ENCODE measurements at regions of chr14 and their contacts with region 1.

Region 1: DNA sequence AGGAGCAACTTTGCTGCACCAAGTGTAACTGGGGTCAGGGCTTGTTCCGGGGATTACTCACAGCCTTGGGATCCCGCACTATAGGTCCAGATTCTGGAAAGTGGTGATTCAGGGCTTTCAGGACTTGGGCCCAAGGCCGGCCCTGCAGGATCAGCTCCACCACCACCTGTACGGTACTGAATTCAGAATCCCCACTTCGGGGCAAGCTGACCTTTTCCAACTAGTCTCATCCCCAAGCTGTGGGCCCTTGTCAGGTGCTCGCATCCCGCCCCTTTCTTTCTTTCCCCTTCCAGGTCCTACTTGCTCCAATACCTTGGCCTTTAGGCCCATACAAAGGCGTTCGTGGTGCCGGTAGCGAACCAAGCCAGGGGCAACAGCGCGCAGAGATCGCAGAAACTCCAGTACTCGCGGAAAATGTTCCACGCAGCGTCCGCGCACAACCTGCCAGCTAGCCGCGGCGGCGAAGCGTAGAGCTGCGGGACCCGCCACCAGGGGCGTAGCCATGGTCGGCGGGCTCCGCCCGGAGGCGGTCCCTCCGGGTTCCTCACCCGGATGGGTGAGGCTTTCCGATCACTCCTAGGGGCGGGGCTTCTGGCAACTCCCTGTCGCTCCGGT is 487 bp downstream of the TINF2 start:
- H3K4me3 Mint-ChIP-seq: peak overlapping the region; percentile 93
- H3K27ac Mint-ChIP-seq: peak overlapping the region; percentile 100
- H3K4me1 Mint-ChIP-seq: peaks cover 75% of the 10 kb centered on the region
- H3K27me3 Mint-ChIP-seq: no peaks in the 10 kb centered on the region

Region 2: GRCh38 chr14:24215495-24216344 is 26.2 kb before region 1 on chr14 and contains the start of gene MDP1:
- intact Hi-C with region 1: loop called (anchors 1 kb)
- H3K4me3 Mint-ChIP-seq: peak within 1 kb of the TSS; percentile 90
- H3K27ac Mint-ChIP-seq: peak within 1 kb of the TSS; percentile 99
- H3K4me1 Mint-ChIP-seq: peaks cover 41% of the 10 kb centered on the region
- H3K27me3 Mint-ChIP-seq: no peaks in the 10 kb centered on the region

Region 3: GRCh38 chr14:24226477-24226876 is 15.5 kb before region 1 on chr14:
- intact Hi-C with region 1: no loop called
- H3K4me3 Mint-ChIP-seq: no peak overlapping the region
- H3K27ac Mint-ChIP-seq: no peak overlapping the region
- H3K4me1 Mint-ChIP-seq: peaks cover 33% of the 10 kb centered on the region
- H3K27me3 Mint-ChIP-seq: no peaks in the 10 kb centered on the region

Region 4: GRCh38 chr14:24271134-24271833 is 29.3 kb after region 1 on chr14 and contains the start of gene RABGGTA:
- intact Hi-C with region 1: loop called (anchors 2 kb)
- H3K4me3 Mint-ChIP-seq: peak within 1 kb of the TSS; percentile 90
- H3K27ac Mint-ChIP-seq: peak within 1 kb of the TSS; percentile 79
- H3K4me1 Mint-ChIP-seq: peaks cover 64% of the 10 kb centered on the region
- H3K27me3 Mint-ChIP-seq: no peaks in the 10 kb centered on the region

Region 5: GRCh38 chr14:24285351-24285750 is 43.4 kb after region 1 on chr14:
- intact Hi-C with region 1: no loop called
- H3K4me3 Mint-ChIP-seq: no peak overlapping the region
- H3K27ac Mint-ChIP-seq: peak overlapping the region; percentile 73
- H3K4me1 Mint-ChIP-seq: peaks cover 48% of the 10 kb centered on the region
- H3K27me3 Mint-ChIP-seq: no peaks in the 10 kb centered on the region

Region 6: DNA sequence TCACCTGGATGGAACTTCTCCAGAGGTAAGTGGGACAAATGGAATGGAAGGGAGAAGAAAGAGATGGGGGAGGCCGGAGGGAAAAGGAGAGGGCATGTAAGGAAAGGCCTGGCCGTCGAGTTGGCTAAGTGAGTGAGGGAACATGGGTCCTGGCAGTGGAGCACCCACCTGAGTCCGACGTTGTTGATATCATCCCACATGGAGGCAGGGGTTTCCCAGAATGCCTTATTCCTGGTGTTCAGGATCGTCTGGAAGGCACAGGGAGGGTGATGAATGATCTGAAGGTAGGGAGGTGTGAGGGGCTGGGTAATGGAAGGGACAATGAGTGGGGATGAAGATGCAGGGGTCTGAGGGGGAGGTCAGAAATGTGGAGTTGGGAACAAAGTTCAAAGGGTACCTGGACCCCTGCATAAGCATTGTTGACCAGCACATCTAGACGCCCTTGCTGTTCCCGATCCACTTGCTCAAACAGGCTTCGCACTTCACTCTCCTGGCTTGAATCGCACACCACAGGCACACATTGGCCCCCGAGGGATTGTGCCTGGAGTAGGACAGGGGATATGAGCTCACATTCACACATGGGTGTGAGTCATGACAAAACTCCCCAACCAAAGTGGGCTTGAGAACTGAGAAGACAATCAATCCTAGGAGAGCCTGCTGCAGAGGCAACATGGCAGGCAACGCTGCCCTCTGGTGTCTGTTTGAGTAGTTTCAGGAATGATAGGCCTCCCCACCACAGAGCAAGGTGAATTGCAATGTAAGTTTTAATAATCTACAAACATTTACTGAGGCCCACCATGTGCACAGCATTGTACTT is 54.6 kb after region 1 on chr14:
- intact Hi-C with region 1: loop called (anchors 1 kb)
- H3K4me3 Mint-ChIP-seq: no peak overlapping the region
- H3K27ac Mint-ChIP-seq: peak overlapping the region; percentile 64
- H3K4me1 Mint-ChIP-seq: peaks cover 38% of the 10 kb centered on the region
- H3K27me3 Mint-ChIP-seq: no peaks in the 10 kb centered on the region

Region 7: DNA sequence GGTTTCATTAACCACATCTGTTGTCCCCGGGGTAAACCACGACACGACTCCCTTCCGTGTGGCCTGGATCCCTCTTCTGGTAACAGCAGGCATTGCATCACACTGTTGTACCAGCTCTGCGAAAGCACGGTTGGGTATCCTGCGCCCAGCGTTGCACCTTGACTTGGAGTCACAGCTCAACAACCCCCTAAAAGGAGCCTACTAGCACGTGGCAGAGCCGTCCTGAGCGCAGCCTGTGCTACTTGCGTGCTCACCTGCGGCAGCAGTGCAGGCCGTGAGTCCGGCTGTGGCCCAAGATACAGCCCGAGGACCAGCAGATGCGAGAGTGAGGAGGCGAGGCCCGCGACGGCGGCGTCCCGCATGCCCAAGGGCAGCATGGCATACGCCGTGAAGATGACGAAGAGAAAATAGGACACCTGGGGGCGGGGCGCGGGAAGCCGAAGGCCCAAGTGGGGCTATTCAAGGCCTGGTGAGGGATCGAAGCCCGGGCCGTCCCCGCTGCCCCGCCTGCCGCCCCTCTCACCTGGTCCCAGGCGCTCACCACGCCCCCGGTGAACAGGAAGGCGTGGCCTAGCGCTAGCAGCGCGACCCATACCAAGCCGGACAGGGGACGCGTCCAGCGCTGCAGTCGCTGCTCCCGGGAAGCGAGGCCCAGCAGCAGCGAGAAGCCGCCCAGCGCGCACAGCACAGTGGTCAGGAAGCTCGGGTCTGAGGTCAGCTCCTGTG is 90.5 kb after region 1 on chr14:
- intact Hi-C with region 1: no loop called
- H3K4me3 Mint-ChIP-seq: peak overlapping the region; percentile 67
- H3K27ac Mint-ChIP-seq: peak overlapping the region; percentile 76
- H3K4me1 Mint-ChIP-seq: peaks cover 97% of the 10 kb centered on the region
- H3K27me3 Mint-ChIP-seq: peaks cover 39% of the 10 kb centered on the region

Region 8: DNA sequence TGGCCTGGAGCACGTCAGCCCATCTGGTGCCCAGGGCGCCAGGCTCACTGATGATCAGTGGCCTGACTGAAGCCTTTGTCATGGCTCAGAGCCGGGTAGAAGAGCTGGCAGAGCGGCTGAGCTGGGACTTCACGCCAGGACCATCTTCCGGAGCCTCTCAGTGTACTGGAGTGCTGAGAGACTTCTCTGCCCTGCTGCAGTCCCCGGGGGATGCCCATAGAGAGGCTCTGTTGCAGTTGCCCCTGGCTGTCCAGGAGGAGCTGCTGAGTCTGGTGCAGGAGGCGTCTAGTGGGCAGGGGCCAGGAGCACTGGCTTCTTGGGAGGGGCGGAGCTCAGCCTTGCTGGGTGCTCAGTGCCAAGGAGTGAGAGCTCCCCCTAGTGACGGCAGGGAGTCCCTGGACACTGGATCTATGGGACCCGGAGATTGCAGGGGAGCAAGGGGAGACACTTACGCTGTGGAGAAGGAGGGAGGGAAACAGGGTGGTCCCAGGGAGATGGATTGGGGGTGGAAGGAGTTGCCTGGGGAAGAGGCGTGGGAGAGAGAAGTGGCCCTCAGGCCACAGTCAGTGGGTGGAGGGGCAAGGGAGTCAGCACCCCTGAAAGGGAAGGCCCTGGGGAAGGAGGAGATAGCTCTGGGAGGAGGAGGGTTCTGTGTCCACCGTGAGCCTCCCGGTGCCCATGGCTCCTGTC is 189.8 kb after region 1 on chr14:
- intact Hi-C with region 1: loop called (anchors 2 kb)
- H3K4me3 Mint-ChIP-seq: peak overlapping the region; percentile 82
- H3K27ac Mint-ChIP-seq: peak overlapping the region; percentile 97
- H3K4me1 Mint-ChIP-seq: peaks cover 71% of the 10 kb centered on the region
- H3K27me3 Mint-ChIP-seq: peaks cover 7% of the 10 kb centered on the region